Activated CD8-positive, alpha-beta T cell treated with anti-CD3 and anti-CD28 coated beads, Interleukin-2, amount 10 ng/mL, durations not matched to agents 7 days and 5 days (primary cell): ENCODE measurements at regions of chr14 and their contacts with region 1.

Region 1: DNA sequence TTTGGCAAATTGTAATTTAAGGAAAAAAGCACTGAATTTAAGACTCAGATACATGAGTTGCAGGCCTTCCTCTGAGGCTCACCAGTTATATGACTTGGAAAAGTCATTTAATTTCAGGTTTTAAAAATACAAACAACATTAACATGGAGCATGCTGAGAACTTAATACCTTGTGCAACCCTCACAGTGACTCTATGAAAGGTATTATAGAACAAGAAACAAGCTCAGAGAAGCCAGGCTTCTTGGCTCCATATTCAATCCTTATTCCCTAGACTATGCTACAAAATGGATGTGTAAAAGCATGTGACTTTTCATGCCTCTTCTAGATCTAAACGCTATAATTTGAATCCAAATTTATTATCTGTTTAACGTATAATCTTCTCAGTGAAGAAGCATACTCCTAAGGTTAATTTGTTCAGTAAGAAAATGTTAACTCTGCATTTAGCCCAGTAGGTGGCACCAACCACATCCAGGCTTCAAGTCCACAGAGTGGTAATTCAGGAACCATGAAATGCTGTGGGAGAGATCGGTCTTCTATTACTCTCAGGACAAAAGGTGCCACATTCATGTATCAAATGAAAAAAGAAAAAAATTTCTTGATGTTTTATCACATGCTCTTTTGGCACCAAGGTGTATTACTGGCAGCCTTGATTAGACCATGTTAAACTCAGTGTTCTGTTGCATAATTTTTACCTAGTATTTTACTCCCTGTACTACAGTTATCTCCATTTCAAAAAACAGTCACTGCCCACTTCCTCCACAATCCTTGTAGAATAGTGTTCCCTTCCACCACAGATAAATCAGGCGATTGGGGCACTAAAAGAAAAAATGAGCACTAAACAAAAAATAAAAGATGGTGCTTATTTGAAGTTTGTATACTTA is 9.3 kb downstream of the CCDC196 start:
- DNase-seq: peak; percentile 57
- ATAC-seq: peak; percentile 86
- H3K4me3 Mint-ChIP-seq: no peak overlapping the region
- H3K27ac Mint-ChIP-seq: no peak overlapping the region
- H3K4me1 Mint-ChIP-seq: peaks cover 27% of the 10 kb centered on the region
- H3K27me3 Mint-ChIP-seq: no peaks in the 10 kb centered on the region

Region 2: GRCh38 chr14:66507722-66508546 is 12.5 kb after region 1 on chr14 and contains the start of gene GPHN:
- CTCF ChIA-PET with region 1: interaction called, 29 read pairs
- POLR2A ChIA-PET with region 1: interaction called, 15 read pairs
- DNase-seq: peak; percentile 94
- ATAC-seq: peak; percentile 96
- H3K4me3 Mint-ChIP-seq: peak within 1 kb of the TSS; percentile 91
- H3K27ac Mint-ChIP-seq: peak within 1 kb of the TSS; percentile 93
- H3K4me1 Mint-ChIP-seq: peaks cover 42% of the 10 kb centered on the region
- H3K27me3 Mint-ChIP-seq: peaks cover 17% of the 10 kb centered on the region
- total RNA-seq, gene GPHN: 14.4 to 15.9 TPM